ENCODE measurements at regions of chr2 and their contacts with region 1.

Region 1: GRCh38 chr2:204545023-204545860 is at the start of gene PARD3B:
- DNase-seq: peak; percentile 54 to 77 (median 65)
- H3K4me3 ChIP-seq: peak within 1 kb of the TSS; percentile 83
- H3K27ac ChIP-seq: peak within 1 kb of the TSS; percentile 88 to 89
- H3K4me1 ChIP-seq: peaks cover 3% of the 10 kb centered on the region
- H3K27me3 ChIP-seq: no peaks in the 10 kb centered on the region
- CTCF ChIP-seq: no peak
- EP300 ChIP-seq: no peak
- POLR2A ChIP-seq: no peak
- total RNA-seq, gene PARD3B: 21.4 to 46.6 (median 29.7) TPM

Region 2: DNA sequence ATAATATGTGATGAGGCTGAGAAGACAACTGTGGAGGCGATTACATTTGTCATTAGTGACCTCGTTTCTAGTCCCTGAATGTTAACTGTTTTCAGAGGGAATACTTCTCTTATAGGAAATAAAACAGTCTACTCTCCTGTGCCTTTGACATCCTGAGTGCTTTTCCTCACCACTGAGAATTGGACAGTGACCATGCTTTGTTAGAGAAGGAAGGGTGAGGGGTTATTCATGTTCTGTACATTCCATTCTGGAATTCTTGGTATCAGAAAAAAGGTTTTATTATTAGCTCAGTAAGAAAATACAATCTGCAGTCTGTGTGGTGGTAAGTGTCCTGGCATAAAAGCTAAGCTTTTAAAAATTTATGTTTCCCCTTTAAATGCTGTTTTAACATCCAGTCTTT is 58.8 kb after region 1 on chr2:
- intact Hi-C with region 1: loop called in 1 of 4 experiments (anchors 5 kb)
- DNase-seq: no peak
- H3K4me3 ChIP-seq: no peak overlapping the region
- H3K27ac ChIP-seq: no peak overlapping the region
- H3K4me1 ChIP-seq: peaks cover 17% of the 10 kb centered on the region
- H3K27me3 ChIP-seq: no peaks in the 10 kb centered on the region
- CTCF ChIP-seq: no peak
- EP300 ChIP-seq: no peak
- POLR2A ChIP-seq: no peak

Region 3: GRCh38 chr2:204681412-204681811 is 136.2 kb after region 1 on chr2:
- intact Hi-C with region 1: loop called in 1 of 4 experiments (anchors 10 kb)
- DNase-seq: peak in 1 of 5 donors; percentile 8
- H3K4me3 ChIP-seq: no peak overlapping the region
- H3K27ac ChIP-seq: peak overlapping the region in 1 of 2 donors; percentile 0
- H3K4me1 ChIP-seq: peaks cover 1% of the 10 kb centered on the region
- H3K27me3 ChIP-seq: no peaks in the 10 kb centered on the region
- CTCF ChIP-seq: no peak
- EP300 ChIP-seq: no peak
- POLR2A ChIP-seq: no peak

Measured in ovary (tissue), 10 donors.